Activated CD4-positive, alpha-beta T cell treated with anti-CD3 and anti-CD28 coated beads, Interleukin-2, amount 10 ng/mL, durations not matched to agents 24 days and 14 days (primary cell): ENCODE measurements at regions of chr12 and their contacts with region 1.

Region 1: GRCh38 chr12:120886199-120887018 is 17.7 kb downstream of the SPPL3 start:
- DNase-seq: no peak
- H3K4me3 Mint-ChIP-seq: peak overlapping the region; percentile 43
- H3K27ac Mint-ChIP-seq: peak overlapping the region; percentile 72
- H3K4me1 Mint-ChIP-seq: peaks cover 25% of the 10 kb centered on the region
- H3K27me3 Mint-ChIP-seq: no peaks in the 10 kb centered on the region

Region 2: DNA sequence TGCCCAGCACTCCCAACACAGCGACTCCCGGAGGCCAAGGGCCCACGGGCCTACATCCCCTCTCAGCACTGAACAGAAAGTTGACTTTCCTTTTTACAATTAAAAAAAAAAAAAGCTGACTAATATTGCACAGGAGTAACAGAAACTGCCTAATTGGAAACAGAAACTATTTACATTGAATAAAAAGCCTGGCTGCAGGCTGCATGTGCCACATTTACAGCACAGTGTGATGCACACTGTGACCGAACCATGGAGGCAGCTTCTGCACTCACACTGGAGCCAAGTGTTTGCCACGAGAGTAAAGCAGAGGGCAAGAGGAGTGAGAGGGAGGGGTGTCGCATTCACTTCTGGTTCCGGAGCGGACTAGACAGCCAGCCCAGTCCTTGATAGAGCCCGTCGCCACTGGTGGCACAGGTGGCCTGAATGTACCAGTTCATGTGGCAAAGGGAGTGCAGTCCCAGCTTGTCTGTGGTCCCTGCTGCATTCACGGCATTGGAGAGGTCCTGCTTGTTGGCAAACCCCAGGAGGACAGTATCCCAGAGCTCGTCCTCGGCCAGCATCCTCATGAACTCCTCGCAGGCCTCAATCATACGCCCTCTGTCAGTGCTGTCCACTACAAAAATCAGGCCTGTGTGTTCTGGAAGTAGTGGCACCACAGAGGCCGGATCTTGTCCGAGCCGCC is 41.5 kb before region 1 on chr12:
- intact Hi-C with region 1: loop called (anchors 5 kb)
- DNase-seq: no peak
- H3K4me3 Mint-ChIP-seq: no peak overlapping the region
- H3K27ac Mint-ChIP-seq: no peak overlapping the region
- H3K4me1 Mint-ChIP-seq: peaks cover 23% of the 10 kb centered on the region
- H3K27me3 Mint-ChIP-seq: no peaks in the 10 kb centered on the region

Region 3: DNA sequence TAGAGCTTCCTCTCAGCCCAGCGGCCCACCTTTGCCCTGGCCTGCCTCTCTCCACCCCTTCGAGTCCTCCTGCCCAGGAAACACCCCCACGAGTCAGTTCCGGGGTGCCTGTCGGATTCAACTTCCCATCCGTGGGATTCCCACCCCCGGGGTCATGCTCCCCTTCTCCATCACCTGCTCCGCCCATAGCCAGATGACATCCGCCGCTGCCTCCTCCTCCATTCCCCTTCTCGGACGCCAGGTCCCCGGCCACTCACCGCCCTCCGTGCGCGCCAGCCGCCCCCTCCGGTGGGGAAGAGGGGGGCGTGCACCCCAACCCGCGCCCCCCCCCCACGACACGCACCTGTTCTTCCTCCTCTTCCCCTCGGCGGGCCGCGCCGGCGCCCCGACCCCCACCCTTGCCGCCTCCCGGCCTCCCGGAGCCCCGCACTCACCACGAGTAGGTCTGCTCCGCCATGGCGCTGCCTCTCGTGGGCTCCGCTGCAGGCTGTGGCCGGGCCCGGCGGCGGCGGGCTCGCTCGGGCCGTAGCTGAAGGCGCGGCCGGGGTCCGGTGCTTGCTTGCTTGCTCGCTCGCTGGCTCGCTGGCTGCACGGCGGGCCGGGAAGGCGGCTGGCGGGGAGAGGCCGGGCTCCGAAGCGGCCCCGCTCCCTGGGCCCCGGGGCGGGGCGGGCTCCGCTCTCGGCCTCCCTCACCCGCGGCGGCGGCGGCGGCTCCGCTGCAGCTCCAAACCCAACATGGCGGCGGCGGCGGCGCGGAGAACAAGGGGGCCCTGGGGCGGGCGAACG is 17.2 kb after region 1 on chr12:
- intact Hi-C with region 1: loop called (anchors 2 kb)
- DNase-seq: peak; percentile 91
- H3K4me3 Mint-ChIP-seq: peak overlapping the region; percentile 100
- H3K27ac Mint-ChIP-seq: peak overlapping the region; percentile 94
- H3K4me1 Mint-ChIP-seq: peaks cover 24% of the 10 kb centered on the region
- H3K27me3 Mint-ChIP-seq: no peaks in the 10 kb centered on the region

Region 4: GRCh38 chr12:121038861-121039666 is 152.7 kb after region 1 on chr12 and contains the start of gene OASL:
- intact Hi-C with region 1: no loop called
- DNase-seq: peak; percentile 89
- H3K4me3 Mint-ChIP-seq: peak within 1 kb of the TSS; percentile 89
- H3K27ac Mint-ChIP-seq: peak within 1 kb of the TSS; percentile 85
- H3K4me1 Mint-ChIP-seq: peaks cover 44% of the 10 kb centered on the region
- H3K27me3 Mint-ChIP-seq: peaks cover 13% of the 10 kb centered on the region
- total RNA-seq, gene OASL: 2.9 and 3.0 TPM in 2 replicates